WTC11 (cell line): ENCODE measurements at regions of chr1 and their contacts with region 1.

Region 1: DNA sequence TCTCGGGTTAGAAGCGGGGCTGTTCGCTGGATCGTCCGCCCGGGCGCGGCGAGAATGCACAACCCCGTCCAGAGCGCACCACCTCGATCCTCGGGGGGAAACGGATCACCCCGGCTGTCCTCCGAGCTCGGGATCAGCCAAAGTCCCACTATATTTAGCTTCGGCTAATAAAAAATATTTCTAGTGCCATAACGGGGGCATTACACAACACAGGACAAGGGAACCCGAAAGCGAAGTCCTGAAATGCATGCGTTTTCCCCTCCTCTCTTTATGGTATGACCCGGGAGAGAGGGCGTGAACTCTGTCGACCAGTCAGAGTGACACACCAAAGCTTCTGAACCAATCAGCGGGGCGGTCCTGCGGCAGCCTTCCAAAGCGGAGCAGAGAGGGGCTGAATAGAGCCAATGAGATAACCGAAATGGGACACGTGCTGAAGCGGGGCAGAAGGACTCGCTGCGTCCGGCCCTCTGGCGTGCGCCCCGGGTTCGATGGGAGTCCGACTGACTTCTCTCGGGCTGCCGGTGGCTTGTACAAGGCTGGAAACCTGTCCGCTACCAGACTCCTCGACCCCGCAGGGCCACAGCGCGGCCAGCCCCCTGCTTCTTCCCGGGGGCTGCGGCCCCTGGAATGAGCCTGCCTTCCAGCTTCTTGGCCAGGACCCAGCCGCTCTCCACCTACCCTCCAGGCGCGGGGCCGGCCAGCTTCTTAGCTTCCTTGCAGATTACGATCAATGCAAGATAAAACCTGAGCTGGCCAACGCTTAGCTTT is at the start of gene ALDH4A1:
- DNase-seq: peak; percentile 96
- ATAC-seq: peak; percentile 95
- H3K4me3 Mint-ChIP-seq: peak within 1 kb of the TSS; percentile 98
- H3K27ac Mint-ChIP-seq: peak within 1 kb of the TSS; percentile 99
- H3K4me1 Mint-ChIP-seq: peaks cover 17% of the 10 kb centered on the region
- H3K27me3 Mint-ChIP-seq: no peaks in the 10 kb centered on the region; the same call in none of the 2 replicates
- CTCF ChIP-seq: no peak
- total RNA-seq, gene ALDH4A1: 31.0 to 37.5 TPM (median 36.2 TPM) in 3 replicates

Region 2: GRCh38 chr1:18828224-18828623 is 74.5 kb before region 1 on chr1:
- CTCF ChIA-PET with region 1: no interaction called
- POLR2A ChIA-PET with region 1: no interaction called
- DNase-seq: no peak
- ATAC-seq: no peak
- H3K4me3 Mint-ChIP-seq: no peak overlapping the region
- H3K27ac Mint-ChIP-seq: no peak overlapping the region
- H3K4me1 Mint-ChIP-seq: no peaks in the 10 kb centered on the region
- H3K27me3 Mint-ChIP-seq: peaks cover 23% of the 10 kb centered on the region
- CTCF ChIP-seq: no peak

Region 3: DNA sequence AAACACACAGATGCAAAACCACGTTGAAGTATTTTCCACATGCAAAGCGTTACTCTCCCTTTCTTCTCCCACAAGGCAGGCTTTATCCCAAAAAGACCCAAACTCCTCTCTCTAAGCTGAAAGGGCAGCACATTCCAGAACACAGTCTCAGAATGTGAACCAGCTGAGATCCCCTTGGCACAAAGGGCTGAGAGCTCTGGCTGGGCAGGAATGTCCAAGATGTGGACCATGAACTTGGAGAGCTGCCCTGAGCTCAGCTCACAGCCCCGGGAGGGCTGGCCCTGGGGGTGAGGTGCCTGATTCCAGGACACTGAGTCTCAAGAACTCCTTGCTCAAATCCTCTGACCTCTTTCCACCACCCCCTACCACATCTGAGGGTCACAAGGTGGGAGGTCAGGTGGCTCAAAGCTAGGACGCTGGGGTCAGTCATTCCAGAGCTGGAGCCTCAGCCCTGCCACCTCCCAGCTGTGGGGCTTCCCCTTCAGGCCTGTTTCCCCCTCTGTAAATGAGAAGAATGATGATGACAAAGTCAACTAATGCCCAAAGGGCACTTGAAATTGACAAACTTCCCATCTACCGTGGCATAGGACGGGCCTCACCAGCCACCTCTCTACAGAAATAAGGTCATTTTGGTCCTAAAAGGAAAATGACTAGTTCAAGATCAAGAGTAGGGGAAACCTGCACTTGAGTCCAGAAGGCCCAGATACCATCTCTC is 11.8 kb before region 1 on chr1:
- CTCF ChIA-PET with region 1: interaction called, 41 read pairs
- POLR2A ChIA-PET with region 1: no interaction called
- DNase-seq: no peak
- ATAC-seq: no peak
- H3K4me3 Mint-ChIP-seq: no peak overlapping the region
- H3K27ac Mint-ChIP-seq: no peak overlapping the region
- H3K4me1 Mint-ChIP-seq: no peaks in the 10 kb centered on the region
- H3K27me3 Mint-ChIP-seq: no peaks in the 10 kb centered on the region
- CTCF ChIP-seq: no peak

Region 4: DNA sequence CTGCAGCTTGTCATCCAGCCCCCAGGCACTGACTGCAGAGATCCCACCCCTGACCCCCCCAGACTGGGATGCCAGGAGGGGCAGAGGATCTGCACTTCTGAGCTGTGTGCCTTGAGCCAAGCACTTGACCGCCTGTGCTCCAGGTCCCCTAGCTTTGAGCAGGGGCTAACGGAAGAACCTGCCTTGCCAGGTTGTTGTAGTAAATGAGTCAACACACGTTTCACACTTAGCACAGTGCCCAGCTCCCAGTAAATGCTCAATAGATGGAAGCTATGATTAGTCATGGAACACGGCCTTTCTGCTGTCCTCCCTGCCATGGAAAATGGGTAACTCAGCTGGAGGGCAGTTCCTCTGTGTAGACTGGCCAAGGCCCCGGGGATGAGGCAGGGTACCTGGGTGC is 29.7 kb after region 1 on chr1:
- CTCF ChIA-PET with region 1: interaction called, 19 read pairs
- POLR2A ChIA-PET with region 1: no interaction called
- DNase-seq: no peak
- ATAC-seq: no peak
- H3K4me3 Mint-ChIP-seq: no peak overlapping the region
- H3K27ac Mint-ChIP-seq: peak overlapping the region; percentile 5; the same call in 1 of the 2 replicates
- H3K4me1 Mint-ChIP-seq: peaks cover 44% of the 10 kb centered on the region
- H3K27me3 Mint-ChIP-seq: no peaks in the 10 kb centered on the region
- CTCF ChIP-seq: no peak

Region 5: DNA sequence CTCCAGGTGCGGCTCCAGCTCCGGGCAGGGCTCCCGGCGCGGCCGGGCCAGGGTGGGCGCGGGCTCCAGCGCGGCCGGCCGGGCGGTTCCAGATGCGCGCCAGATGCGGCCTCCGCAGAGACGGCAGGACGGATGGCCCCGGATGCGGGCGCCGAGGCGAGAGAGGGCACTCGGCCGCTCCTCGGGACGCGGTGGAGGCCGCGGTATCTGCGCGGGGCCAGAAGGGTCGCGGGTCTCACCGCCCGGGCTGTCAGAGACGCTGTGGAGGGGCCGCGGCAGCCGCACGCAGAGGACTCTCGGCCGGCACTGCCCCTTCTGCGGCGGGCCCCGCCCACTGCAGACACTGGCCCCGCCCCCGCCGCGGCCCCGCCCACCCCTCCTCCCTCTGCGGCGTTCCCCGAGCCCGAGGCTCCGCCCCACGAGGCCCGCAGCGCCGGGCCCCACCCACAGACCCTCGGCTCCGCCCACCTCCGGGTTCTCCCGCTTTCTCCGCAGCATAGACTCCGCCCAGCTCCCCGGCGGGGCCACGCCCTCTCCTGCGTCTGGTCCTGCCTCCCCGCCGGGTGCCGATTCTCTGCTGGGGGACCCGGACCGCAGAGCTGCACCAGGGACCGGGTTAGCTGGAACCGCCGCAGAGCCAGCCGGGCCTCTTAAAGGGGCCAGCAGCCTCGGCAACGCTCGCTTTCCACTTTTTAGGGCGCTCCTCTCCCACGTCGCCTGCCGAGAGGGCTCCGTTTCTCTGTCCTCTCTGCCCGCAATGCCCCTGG is 53.8 kb after region 1 on chr1 and contains the start of gene IFFO2:
- CTCF ChIA-PET with region 1: interaction called, 29 read pairs
- POLR2A ChIA-PET with region 1: interaction called, 8 read pairs
- DNase-seq: peak; percentile 99
- ATAC-seq: peak; percentile 91
- H3K4me3 Mint-ChIP-seq: peak within 1 kb of the TSS; percentile 86
- H3K27ac Mint-ChIP-seq: no peak within 1 kb of the TSS
- H3K4me1 Mint-ChIP-seq: peaks cover 18% of the 10 kb centered on the region
- H3K27me3 Mint-ChIP-seq: peaks cover 59% of the 10 kb centered on the region
- CTCF ChIP-seq: no peak
- total RNA-seq, gene IFFO2: 6.5 to 8.1 TPM (median 6.9 TPM) in 3 replicates

Region 6: GRCh38 chr1:19044975-19045831 is 142.5 kb after region 1 on chr1:
- CTCF ChIA-PET with region 1: interaction called, 17 read pairs
- POLR2A ChIA-PET with region 1: no interaction called
- DNase-seq: no peak
- ATAC-seq: no peak
- H3K4me3 Mint-ChIP-seq: no peak overlapping the region
- H3K27ac Mint-ChIP-seq: no peak overlapping the region
- H3K4me1 Mint-ChIP-seq: peaks cover 10% of the 10 kb centered on the region
- H3K27me3 Mint-ChIP-seq: no peaks in the 10 kb centered on the region
- CTCF ChIP-seq: no peak

Region 7: DNA sequence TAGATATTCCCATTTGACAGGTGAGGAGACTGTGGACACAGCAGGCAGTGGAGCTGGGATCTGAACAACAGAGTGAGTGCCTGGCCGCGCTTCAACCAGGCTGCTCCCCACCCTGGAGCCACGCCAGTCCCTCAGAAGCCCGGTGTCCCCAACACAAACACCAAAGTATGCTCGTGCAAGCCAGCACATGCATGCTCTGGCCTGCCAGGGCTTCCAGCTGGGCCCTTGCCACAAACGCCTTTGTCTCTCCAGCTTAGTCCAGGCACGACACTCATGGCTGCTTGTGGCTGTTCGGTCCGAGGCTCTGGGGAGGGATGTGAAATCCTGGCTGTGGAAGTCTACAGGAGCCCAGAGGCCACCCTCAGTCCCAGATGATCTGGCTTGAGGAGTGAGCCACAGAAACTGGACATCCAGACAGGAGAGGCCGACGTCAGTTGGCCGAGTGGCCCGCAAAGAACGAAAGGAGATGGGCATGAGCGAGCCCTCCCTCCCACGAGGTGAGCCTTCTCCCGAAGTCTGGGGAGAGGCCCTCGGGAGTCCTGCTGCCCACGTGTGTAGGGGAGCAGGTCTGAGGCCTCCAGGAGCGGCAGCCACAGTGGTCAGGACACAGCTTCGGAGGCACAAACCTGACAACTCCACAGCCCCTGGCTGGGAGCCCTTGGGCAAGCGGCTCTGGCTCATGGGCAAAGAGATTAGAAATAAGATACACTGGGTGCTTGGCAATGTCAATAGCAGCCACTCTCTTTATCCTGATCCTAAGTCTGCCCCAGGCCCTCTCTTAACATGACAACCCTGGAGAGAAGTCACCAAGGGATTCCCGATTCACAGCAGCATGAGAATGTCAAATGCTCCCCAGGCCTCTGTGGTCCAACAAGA is 170.8 kb after region 1 on chr1:
- CTCF ChIA-PET with region 1: interaction called, 30 read pairs
- POLR2A ChIA-PET with region 1: no interaction called
- DNase-seq: no peak
- ATAC-seq: no peak
- H3K4me3 Mint-ChIP-seq: no peak overlapping the region
- H3K27ac Mint-ChIP-seq: peak overlapping the region; percentile 57; the same call in 1 of the 2 replicates
- H3K4me1 Mint-ChIP-seq: peaks cover 3% of the 10 kb centered on the region; the same call in 1 of the 2 replicates
- H3K27me3 Mint-ChIP-seq: no peaks in the 10 kb centered on the region
- CTCF ChIP-seq: no peak